Activated CD4-positive, alpha-beta T cell treated with anti-CD3 and anti-CD28 coated beads for 36 hours (primary cell): ENCODE measurements at regions of chr15 and their contacts with region 1.

Region 1: GRCh38 chr15:72783563-72784237 is at the start of gene ADPGK:
- DNase-seq: peak; percentile 95
- ATAC-seq: peak; percentile 80
- H3K4me3 Mint-ChIP-seq: peak within 1 kb of the TSS; percentile 97
- H3K27ac Mint-ChIP-seq: peak within 1 kb of the TSS; percentile 99
- H3K4me1 Mint-ChIP-seq: peaks cover 60% of the 10 kb centered on the region
- H3K27me3 Mint-ChIP-seq: no peaks in the 10 kb centered on the region
- total RNA-seq, gene ADPGK: 58.0 to 70.8 TPM

Region 2: GRCh38 chr15:72117486-72118399 is 666.0 kb before region 1 on chr15 and contains the start of gene MYO9A:
- CTCF ChIA-PET with region 1: no interaction called
- POLR2A ChIA-PET with region 1: no interaction called
- intact Hi-C with region 1: loop called in 1 of 2 experiments (anchors 1 kb)
- DNase-seq: peak; percentile 100
- ATAC-seq: peak; percentile 73
- H3K4me3 Mint-ChIP-seq: peak within 1 kb of the TSS; percentile 98
- H3K27ac Mint-ChIP-seq: peak within 1 kb of the TSS; percentile 96
- H3K4me1 Mint-ChIP-seq: peaks cover 40% of the 10 kb centered on the region
- H3K27me3 Mint-ChIP-seq: no peaks in the 10 kb centered on the region
- total RNA-seq, gene MYO9A: 19.0 to 20.3 TPM

Region 3: GRCh38 chr15:72473614-72474465 is 309.9 kb before region 1 on chr15 and contains the start of gene ARIH1:
- CTCF ChIA-PET with region 1: no interaction called
- POLR2A ChIA-PET with region 1: no interaction called
- intact Hi-C with region 1: loop called in 1 of 2 experiments (anchors 1 kb)
- DNase-seq: peak; percentile 97
- ATAC-seq: peak; percentile 78
- H3K4me3 Mint-ChIP-seq: peak within 1 kb of the TSS; percentile 92
- H3K27ac Mint-ChIP-seq: peak within 1 kb of the TSS; percentile 92
- H3K4me1 Mint-ChIP-seq: peaks cover 36% of the 10 kb centered on the region
- H3K27me3 Mint-ChIP-seq: no peaks in the 10 kb centered on the region
- total RNA-seq, gene ARIH1: 177 to 195 TPM

Region 4: DNA sequence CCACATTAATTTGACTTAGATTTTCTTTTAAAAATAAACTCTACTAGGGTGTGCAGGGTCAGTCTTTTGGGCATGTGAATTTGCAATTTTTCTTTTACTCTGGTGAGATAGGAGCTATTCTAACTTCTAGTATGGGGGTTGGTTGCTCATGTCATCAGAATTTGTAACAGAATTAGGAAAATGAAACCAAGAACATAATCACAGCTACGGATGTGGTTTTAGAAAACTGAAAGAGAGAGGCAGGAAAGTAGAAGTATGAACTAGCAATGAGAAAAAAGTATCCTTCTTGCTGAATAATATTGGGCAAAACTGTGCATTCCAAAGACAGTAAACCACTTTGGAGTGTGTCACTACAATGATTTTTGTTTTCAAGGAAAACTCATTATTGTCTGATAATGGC is 43.5 kb before region 1 on chr15:
- CTCF ChIA-PET with region 1: interaction called, 4 read pairs
- POLR2A ChIA-PET with region 1: interaction called, 4 read pairs
- intact Hi-C with region 1: loop called (anchors 2 to 5 kb)
- DNase-seq: no peak
- ATAC-seq: peak; percentile 92
- H3K4me3 Mint-ChIP-seq: peak overlapping the region; percentile 13
- H3K27ac Mint-ChIP-seq: peak overlapping the region; percentile 79
- H3K4me1 Mint-ChIP-seq: peaks cover 34% of the 10 kb centered on the region
- H3K27me3 Mint-ChIP-seq: no peaks in the 10 kb centered on the region

Region 5: DNA sequence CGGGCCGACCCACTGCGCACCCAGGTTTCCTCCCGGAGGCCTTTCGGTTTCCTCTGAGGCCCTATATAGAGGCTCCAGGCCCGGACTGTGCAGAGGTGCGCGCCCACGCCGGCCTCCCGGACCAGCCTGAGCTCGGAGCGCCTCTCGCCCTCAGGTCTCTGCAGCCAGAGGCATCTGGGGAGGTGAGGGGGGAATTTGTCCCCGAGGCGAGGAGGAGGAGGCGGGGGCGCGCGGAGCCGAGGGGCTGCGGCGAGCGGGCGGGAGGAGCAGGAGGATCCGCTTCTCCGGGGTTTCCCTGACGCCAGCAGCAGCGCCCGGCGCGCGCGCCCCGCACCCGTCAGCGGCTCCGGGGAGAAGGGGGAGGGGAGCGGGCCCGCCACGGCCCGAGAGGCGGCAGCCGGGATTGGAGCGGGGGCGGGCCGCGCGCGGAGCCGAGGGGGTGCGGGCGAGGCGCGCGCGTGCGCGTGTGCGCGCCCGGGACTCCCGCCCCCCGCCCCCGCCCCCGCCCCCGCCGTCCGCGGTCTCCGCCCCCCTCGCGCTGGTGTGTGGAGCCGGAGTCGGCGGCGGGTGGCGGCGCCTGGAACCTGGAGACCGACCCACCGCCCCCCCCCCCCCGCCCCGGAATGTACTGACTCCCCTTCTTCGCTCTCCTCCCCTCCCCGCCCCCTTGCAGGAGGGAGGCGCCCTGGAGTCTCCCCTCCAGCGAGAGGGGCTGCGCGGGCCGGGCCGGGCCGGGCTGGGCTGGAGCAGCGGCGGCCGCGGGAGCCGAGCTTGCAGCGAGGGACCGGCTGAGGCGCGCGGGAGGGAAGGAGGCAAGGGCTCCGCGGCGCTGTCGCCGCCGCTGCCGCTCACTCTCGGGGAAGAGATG is 268.3 kb after region 1 on chr15 and contains the start of gene NEO1:
- CTCF ChIA-PET with region 1: no interaction called
- POLR2A ChIA-PET with region 1: no interaction called
- intact Hi-C with region 1: loop called (anchors 1 kb)
- DNase-seq: peak; percentile 87
- ATAC-seq: peak; percentile 80
- H3K4me3 Mint-ChIP-seq: peak within 1 kb of the TSS; percentile 74
- H3K27ac Mint-ChIP-seq: peak within 1 kb of the TSS; percentile 53
- H3K4me1 Mint-ChIP-seq: peaks cover 6% of the 10 kb centered on the region
- H3K27me3 Mint-ChIP-seq: peaks cover 16% of the 10 kb centered on the region
- total RNA-seq, gene NEO1: 6.6 to 8.0 TPM

Region 6: DNA sequence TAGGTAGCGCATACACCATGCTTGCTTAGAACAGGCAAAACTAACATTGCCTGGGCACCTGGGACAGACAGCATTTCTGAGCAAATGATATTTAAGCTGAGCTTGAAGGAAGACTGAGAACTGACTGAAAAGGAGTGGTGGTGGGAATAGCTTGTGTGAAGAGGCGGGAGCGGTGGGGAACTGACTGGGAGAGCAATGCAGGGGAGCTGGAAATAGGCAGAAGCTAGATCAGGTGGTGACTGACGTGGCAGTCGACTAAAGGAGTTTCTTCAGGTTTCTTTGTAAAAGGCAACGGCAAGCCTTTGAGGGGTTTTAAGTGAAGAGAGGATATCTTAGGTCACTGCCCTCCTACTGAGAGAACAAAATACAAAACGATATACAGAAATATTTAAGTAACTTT is 330.4 kb after region 1 on chr15:
- CTCF ChIA-PET with region 1: no interaction called
- POLR2A ChIA-PET with region 1: no interaction called
- intact Hi-C with region 1: no loop called
- DNase-seq: no peak
- ATAC-seq: no peak
- H3K4me3 Mint-ChIP-seq: no peak overlapping the region
- H3K27ac Mint-ChIP-seq: no peak overlapping the region
- H3K4me1 Mint-ChIP-seq: peaks cover 2% of the 10 kb centered on the region
- H3K27me3 Mint-ChIP-seq: peaks cover 3% of the 10 kb centered on the region

Region 7: DNA sequence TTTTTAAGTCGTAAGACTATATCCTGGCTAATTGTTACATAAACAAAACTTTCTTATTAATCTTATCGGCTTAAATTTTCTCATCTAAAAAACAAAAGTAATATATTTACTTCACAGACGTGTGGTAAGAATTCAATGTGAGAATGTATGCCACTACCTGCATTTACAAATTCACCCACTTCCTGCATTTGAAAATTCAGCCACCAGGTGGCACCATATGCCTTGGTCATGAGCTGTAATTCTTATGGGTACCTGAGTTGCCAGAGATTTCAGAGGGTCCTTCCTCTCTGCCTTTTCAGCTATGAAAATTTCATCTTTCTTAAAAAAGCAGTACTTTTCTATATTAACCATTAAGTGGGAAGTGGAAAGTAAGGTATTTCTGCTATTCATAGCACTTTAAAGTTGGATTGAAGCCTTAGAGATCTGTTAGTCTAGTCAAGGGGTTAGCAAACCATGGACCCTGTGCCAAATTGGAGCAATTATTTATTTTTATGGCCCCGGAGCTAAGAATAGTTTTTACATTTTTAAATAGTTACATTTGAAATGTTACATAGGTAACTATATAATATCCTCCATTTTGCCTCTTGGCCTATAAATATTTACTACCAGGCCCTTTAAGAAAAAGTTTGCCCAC is 457.3 kb after region 1 on chr15:
- CTCF ChIA-PET with region 1: no interaction called
- POLR2A ChIA-PET with region 1: no interaction called
- intact Hi-C with region 1: loop called in 1 of 2 experiments (anchors 5 kb)
- DNase-seq: peak; percentile 84
- ATAC-seq: no peak
- H3K4me3 Mint-ChIP-seq: no peak overlapping the region
- H3K27ac Mint-ChIP-seq: no peak overlapping the region
- H3K4me1 Mint-ChIP-seq: no peaks in the 10 kb centered on the region
- H3K27me3 Mint-ChIP-seq: no peaks in the 10 kb centered on the region